Activated CD8-positive, alpha-beta T cell treated with anti-CD3 and anti-CD28 coated beads, Interleukin-2, amount 10 ng/mL, durations not matched to agents 7 days and 5 days (primary cell): ENCODE measurements at regions of chr4 and their contacts with region 1.

Region 1: GRCh38 chr4:108620101-108620932 is at the start of gene RPL34:
- DNase-seq: peak; percentile 99
- ATAC-seq: peak; percentile 100
- H3K4me3 Mint-ChIP-seq: peak within 1 kb of the TSS; percentile 87
- H3K27ac Mint-ChIP-seq: peak within 1 kb of the TSS; percentile 89
- H3K4me1 Mint-ChIP-seq: peaks cover 46% of the 10 kb centered on the region
- H3K27me3 Mint-ChIP-seq: no peaks in the 10 kb centered on the region
- total RNA-seq, gene RPL34: 1,024 to 1,097 TPM

Region 2: GRCh38 chr4:108555701-108556100 is 64.6 kb before region 1 on chr4:
- CTCF ChIA-PET with region 1: no interaction called
- POLR2A ChIA-PET with region 1: no interaction called
- DNase-seq: no peak
- ATAC-seq: no peak
- H3K4me3 Mint-ChIP-seq: no peak overlapping the region
- H3K27ac Mint-ChIP-seq: no peak overlapping the region
- H3K4me1 Mint-ChIP-seq: no peaks in the 10 kb centered on the region
- H3K27me3 Mint-ChIP-seq: no peaks in the 10 kb centered on the region

Region 3: GRCh38 chr4:108650212-108651013 is 30.1 kb after region 1 on chr4 and contains the start of gene OSTC:
- CTCF ChIA-PET with region 1: interaction called, 4 read pairs
- POLR2A ChIA-PET with region 1: interaction called, 18 read pairs
- DNase-seq: peak; percentile 94
- ATAC-seq: peak; percentile 91
- H3K4me3 Mint-ChIP-seq: peak within 1 kb of the TSS; percentile 95
- H3K27ac Mint-ChIP-seq: peak within 1 kb of the TSS; percentile 91
- H3K4me1 Mint-ChIP-seq: peaks cover 25% of the 10 kb centered on the region
- H3K27me3 Mint-ChIP-seq: no peaks in the 10 kb centered on the region
- total RNA-seq, gene OSTC: 72.1 to 81.6 TPM

Region 4: DNA sequence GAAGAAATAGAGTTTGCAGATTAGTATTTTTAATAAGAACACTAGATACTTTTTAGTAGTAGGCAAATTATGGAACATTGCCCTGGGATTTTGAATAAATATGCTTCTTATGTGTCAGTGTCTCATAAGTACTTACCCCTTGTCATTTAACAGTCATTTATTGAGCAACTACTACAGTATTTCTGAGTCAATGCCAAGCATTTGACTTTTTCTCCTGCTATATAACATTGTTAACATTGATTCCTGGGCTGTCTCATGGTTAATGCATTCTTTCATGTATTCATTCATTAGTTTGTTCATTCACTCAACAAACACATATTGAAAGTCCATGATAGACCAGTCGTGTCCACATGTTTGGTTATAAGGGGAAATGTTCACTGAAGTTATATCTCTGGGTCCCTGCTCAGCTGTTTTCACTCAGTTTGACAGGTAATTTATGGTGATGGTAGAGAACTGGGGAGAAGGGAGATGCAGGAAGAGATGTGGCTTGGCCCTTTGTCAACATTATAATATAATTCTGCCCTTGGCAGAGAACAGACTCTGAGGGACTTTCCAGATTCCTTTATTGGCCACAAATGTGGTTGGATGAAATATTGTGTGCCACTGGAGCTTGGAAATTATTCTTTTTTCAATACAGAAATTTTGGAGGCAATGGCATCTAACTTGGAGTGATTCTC is 79.9 kb after region 1 on chr4:
- CTCF ChIA-PET with region 1: no interaction called
- POLR2A ChIA-PET with region 1: no interaction called
- DNase-seq: no peak
- ATAC-seq: no peak
- H3K4me3 Mint-ChIP-seq: no peak overlapping the region
- H3K27ac Mint-ChIP-seq: no peak overlapping the region
- H3K4me1 Mint-ChIP-seq: peaks cover 16% of the 10 kb centered on the region
- H3K27me3 Mint-ChIP-seq: peaks cover 3% of the 10 kb centered on the region